ENCODE measurements at regions of chr11 and their contacts with region 1.

Region 1: GRCh38 chr11:13335319-13335718 is 57.7 kb downstream of the BMAL1 start:
- DNase-seq: peak in 3 of 5 donors; percentile 56 to 65 (median 61)
- H3K4me3 ChIP-seq: no peak overlapping the region
- H3K27ac ChIP-seq: no peak overlapping the region
- H3K4me1 ChIP-seq: peaks cover 0 to 23% (median 8%) of the 10 kb centered on the region in 3 donors
- H3K27me3 ChIP-seq: no peaks in the 10 kb centered on the region
- CTCF ChIP-seq: peak; percentile 75

Region 2: GRCh38 chr11:13210424-13210823 is 124.9 kb before region 1 on chr11:
- intact Hi-C with region 1: loop called (anchors 10 kb)
- DNase-seq: peak in 4 of 5 donors; percentile 74 to 84 (median 78)
- H3K4me3 ChIP-seq: no peak overlapping the region
- H3K27ac ChIP-seq: no peak overlapping the region
- H3K4me1 ChIP-seq: no peaks in the 10 kb centered on the region
- H3K27me3 ChIP-seq: no peaks in the 10 kb centered on the region
- CTCF ChIP-seq: peak; percentile 75

Region 3: GRCh38 chr11:13261591-13262061 is 73.7 kb before region 1 on chr11:
- intact Hi-C with region 1: no loop called
- DNase-seq: peak in 1 of 5 donors; percentile 19
- H3K4me3 ChIP-seq: no peak overlapping the region
- H3K27ac ChIP-seq: peak overlapping the region; percentile 57 to 75
- H3K4me1 ChIP-seq: peaks cover 0 to 4% (median 0%) of the 10 kb centered on the region in 3 donors
- H3K27me3 ChIP-seq: no peaks in the 10 kb centered on the region
- CTCF ChIP-seq: no peak

Region 4: DNA sequence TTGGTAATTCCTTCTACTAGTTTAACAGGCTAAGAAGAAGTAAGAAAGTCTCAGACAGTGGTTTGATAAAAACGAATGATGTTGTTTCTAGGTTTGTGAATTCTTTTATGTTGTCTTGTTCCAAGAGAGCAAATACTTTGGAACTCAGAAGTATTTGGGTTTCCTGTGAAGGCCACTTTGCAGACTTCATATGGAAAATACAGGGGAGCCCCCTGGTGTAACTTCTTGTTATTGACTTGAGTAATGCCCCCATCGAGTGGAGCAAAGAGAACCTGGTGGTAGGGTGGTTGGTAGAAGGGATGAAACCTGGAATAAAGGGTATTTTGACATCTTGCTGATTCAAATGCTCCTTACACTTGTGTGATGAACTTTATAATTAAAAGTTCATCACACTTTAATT is 200.5 kb after region 1 on chr11:
- intact Hi-C with region 1: no loop called
- DNase-seq: no peak
- H3K4me3 ChIP-seq: no peak overlapping the region
- H3K27ac ChIP-seq: no peak overlapping the region
- H3K4me1 ChIP-seq: no peaks in the 10 kb centered on the region
- H3K27me3 ChIP-seq: no peaks in the 10 kb centered on the region
- CTCF ChIP-seq: no peak

Measured in kidney (tissue), 22 donors.